ENCODE measurements at regions of chr11 and their contacts with region 1.

Region 1: GRCh38 chr11:62081378-62082291 is 42.2 kb upstream of the INCENP start:
- DNase-seq: peak; percentile 76
- H3K4me3 ChIP-seq: no peak overlapping the region
- H3K27ac ChIP-seq: no peak overlapping the region
- H3K4me1 ChIP-seq: peaks cover 0 to 5% of the 10 kb centered on the region in 2 experiments; a peak in 1 of 4 replicates
- H3K27me3 ChIP-seq: no peaks in the 10 kb centered on the region
- CTCF ChIP-seq: peak; percentile 94
- EP300 ChIP-seq: no peak
- RAD21 ChIP-seq: peak; percentile 98

Region 2: GRCh38 chr11:61701242-61701886 is 380.3 kb before region 1 on chr11:
- CTCF ChIA-PET with region 1: no interaction called
- POLR2A ChIA-PET with region 1: no interaction called
- DNase-seq: peak; percentile 64
- H3K4me3 ChIP-seq: no peak overlapping the region; a peak in 1 of 4 replicates
- H3K27ac ChIP-seq: no peak overlapping the region
- H3K4me1 ChIP-seq: peaks cover 13 to 22% of the 10 kb centered on the region in 2 experiments; a peak in 3 of 4 replicates
- H3K27me3 ChIP-seq: no peaks in the 10 kb centered on the region
- CTCF ChIP-seq: peak; percentile 47
- EP300 ChIP-seq: no peak
- RAD21 ChIP-seq: peak; percentile 23; the same call in 1 of the 2 replicates

Region 3: DNA sequence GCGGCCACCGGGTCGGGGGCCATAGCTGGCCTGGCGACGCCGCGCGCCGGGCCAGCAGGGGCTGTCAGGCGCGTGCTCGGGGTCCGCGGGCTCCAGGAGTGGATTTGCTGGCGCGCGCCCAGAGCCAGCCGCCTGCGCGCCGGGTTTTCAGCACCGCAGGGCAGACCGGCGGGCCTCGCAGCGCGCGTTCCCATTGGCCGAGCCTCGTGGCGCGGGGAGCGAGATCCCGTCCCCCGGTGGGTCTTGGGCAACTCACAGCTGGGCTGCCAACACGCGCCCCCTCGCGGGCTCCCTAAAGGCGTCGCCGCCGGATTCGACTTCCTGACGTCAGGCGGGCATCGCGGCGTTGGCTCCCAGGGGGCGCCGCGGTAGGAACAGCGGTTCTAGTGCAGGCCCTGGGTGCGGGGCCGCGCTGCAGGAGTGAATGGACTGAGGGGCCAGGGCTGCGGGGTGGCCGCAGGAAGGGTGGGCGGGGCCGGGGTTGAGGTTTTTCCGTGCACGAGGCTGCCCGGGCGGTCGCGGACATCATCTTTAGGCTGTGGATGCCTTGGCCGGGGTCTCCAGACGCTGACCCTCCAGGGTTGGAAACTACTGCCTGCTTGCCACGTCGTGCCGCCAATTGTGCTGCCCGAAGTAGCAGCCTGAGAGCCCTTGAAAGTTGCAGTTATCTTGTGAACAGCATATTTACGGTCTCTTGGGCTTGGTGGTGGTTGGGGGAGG is 264.7 kb before region 1 on chr11 and contains the start of gene FADS1:
- CTCF ChIA-PET with region 1: interaction called, 13 read pairs
- POLR2A ChIA-PET with region 1: no interaction called
- DNase-seq: peak; percentile 95
- H3K4me3 ChIP-seq: peak within 1 kb of the TSS; percentile 83 to 87
- H3K27ac ChIP-seq: peak within 1 kb of the TSS; percentile 88 to 98
- H3K4me1 ChIP-seq: peaks cover 17 to 19% of the 10 kb centered on the region in 2 experiments; a peak in 3 of 4 replicates
- H3K27me3 ChIP-seq: no peaks in the 10 kb centered on the region
- CTCF ChIP-seq: peak; percentile 63
- EP300 ChIP-seq: no peak
- RAD21 ChIP-seq: peak; percentile 36
- polyA plus RNA-seq, gene FADS1: 20.6 and 26.4 TPM in 2 replicates

Region 4: GRCh38 chr11:61891331-61892084 is 190.1 kb before region 1 on chr11 and contains the start of gene FADS3:
- CTCF ChIA-PET with region 1: interaction called, 357 read pairs
- POLR2A ChIA-PET with region 1: interaction called, 5 read pairs
- DNase-seq: peak; percentile 96
- H3K4me3 ChIP-seq: peak within 1 kb of the TSS; percentile 77 to 81
- H3K27ac ChIP-seq: peak within 1 kb of the TSS; percentile 24 to 31; a peak in 2 of 4 replicates
- H3K4me1 ChIP-seq: peaks cover 7 to 14% of the 10 kb centered on the region in 2 experiments; a peak in 3 of 4 replicates
- H3K27me3 ChIP-seq: no peaks in the 10 kb centered on the region
- CTCF ChIP-seq: no peak
- EP300 ChIP-seq: no peak
- RAD21 ChIP-seq: no peak
- polyA plus RNA-seq, gene FADS3: 93.3 and 116 TPM in 2 replicates

Region 5: GRCh38 chr11:61940466-61940865 is 141.2 kb before region 1 on chr11:
- CTCF ChIA-PET with region 1: interaction called, 142 read pairs
- POLR2A ChIA-PET with region 1: no interaction called
- DNase-seq: no peak
- H3K4me3 ChIP-seq: no peak overlapping the region
- H3K27ac ChIP-seq: no peak overlapping the region
- H3K4me1 ChIP-seq: no peaks in the 10 kb centered on the region
- H3K27me3 ChIP-seq: no peaks in the 10 kb centered on the region
- CTCF ChIP-seq: no peak
- EP300 ChIP-seq: no peak
- RAD21 ChIP-seq: no peak

Region 6: DNA sequence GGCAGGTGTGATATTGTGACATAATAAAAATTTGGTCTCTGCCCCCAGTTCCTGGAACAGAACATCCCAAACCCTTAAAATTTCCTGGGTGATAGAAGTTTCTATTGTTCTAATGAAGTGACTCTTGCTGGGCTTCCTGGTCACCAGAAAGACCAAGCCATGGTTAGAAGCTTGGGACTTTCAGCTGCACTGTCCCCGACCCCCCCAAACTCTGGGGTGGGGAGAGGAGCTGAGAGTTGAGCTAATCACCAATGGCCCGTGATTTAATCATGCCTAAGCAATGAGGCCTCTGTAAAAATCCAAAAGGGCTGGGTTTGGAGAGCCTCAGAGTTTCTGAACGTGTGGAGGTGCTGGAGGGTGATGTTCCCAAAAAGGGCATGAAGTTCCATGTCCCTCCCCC is 59.4 kb before region 1 on chr11:
- CTCF ChIA-PET with region 1: interaction called, 11 read pairs
- POLR2A ChIA-PET with region 1: no interaction called
- DNase-seq: no peak
- H3K4me3 ChIP-seq: no peak overlapping the region
- H3K27ac ChIP-seq: no peak overlapping the region
- H3K4me1 ChIP-seq: no peaks in the 10 kb centered on the region
- H3K27me3 ChIP-seq: no peaks in the 10 kb centered on the region
- CTCF ChIP-seq: no peak
- EP300 ChIP-seq: no peak
- RAD21 ChIP-seq: no peak

Region 7: GRCh38 chr11:62061351-62062222 is 20.0 kb before region 1 on chr11:
- CTCF ChIA-PET with region 1: interaction called, 43 read pairs
- POLR2A ChIA-PET with region 1: no interaction called
- DNase-seq: no peak
- H3K4me3 ChIP-seq: no peak overlapping the region
- H3K27ac ChIP-seq: no peak overlapping the region
- H3K4me1 ChIP-seq: no peaks in the 10 kb centered on the region
- H3K27me3 ChIP-seq: no peaks in the 10 kb centered on the region
- CTCF ChIP-seq: no peak
- EP300 ChIP-seq: no peak
- RAD21 ChIP-seq: no peak

Region 8: DNA sequence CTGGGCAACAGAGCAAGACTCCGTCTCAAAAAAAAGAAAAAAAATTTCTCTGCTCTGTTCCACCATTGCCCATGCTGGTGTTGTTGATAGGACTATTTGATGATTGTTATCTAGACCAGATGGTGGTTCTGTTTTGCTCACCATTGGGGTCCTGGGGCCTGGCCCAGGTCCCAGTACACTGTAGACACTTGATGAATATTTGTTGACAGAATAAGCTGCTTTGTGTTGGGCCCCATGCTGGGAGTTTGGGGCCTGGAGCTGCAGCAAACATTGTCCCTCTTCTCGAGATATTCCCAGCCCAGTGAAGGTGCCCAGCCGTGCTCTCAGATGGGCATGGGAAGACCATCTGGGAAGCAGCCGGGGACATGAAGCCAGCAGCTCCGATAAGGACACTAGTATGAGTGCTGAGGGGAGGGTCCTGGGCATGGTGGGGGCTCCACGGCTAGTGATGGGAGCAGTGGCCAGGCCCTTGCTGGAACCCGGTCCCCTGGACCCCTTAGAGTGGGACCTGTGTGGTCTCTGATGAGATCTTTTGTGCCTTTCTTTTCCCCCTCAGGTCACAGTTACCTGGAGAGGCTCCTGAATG is 55.7 kb after region 1 on chr11:
- CTCF ChIA-PET with region 1: no interaction called
- POLR2A ChIA-PET with region 1: no interaction called
- DNase-seq: peak; percentile 37
- H3K4me3 ChIP-seq: no peak overlapping the region
- H3K27ac ChIP-seq: no peak overlapping the region
- H3K4me1 ChIP-seq: no peaks in the 10 kb centered on the region; a peak in 1 of 4 replicates
- H3K27me3 ChIP-seq: no peaks in the 10 kb centered on the region
- CTCF ChIP-seq: no peak
- EP300 ChIP-seq: no peak
- RAD21 ChIP-seq: no peak